ENCODE measurements at regions of chr4 and their contacts with region 1.

Region 1: GRCh38 chr4:82360298-82361177 is 13.3 kb downstream of the HNRNPD start:
- DNase-seq: no peak
- ATAC-seq: peak; percentile 56
- H3K4me3 Mint-ChIP-seq: no peak overlapping the region
- H3K27ac Mint-ChIP-seq: peak overlapping the region; percentile 68
- H3K4me1 Mint-ChIP-seq: peaks cover 84% of the 10 kb centered on the region
- H3K27me3 Mint-ChIP-seq: no peaks in the 10 kb centered on the region

Region 2: GRCh38 chr4:82373816-82374625 is 13.5 kb after region 1 on chr4 and contains the start of gene HNRNPD:
- CTCF ChIA-PET with region 1: interaction called, 16 read pairs
- DNase-seq: peak; percentile 98
- ATAC-seq: peak; percentile 88
- H3K4me3 Mint-ChIP-seq: peak within 1 kb of the TSS; percentile 94
- H3K27ac Mint-ChIP-seq: peak within 1 kb of the TSS; percentile 100
- H3K4me1 Mint-ChIP-seq: peaks cover 38% of the 10 kb centered on the region
- H3K27me3 Mint-ChIP-seq: no peaks in the 10 kb centered on the region
- total RNA-seq, gene HNRNPD: 385 to 421 TPM

Measured in activated CD8-positive, alpha-beta memory T cell treated with anti-CD3 and anti-CD28 coated beads, Interleukin-2, amount 10 ng/mL, durations not matched to agents 7 days and 5 days (primary cell).